B cell (primary cell): ENCODE measurements at regions of chr2 and their contacts with region 1.

Region 1: GRCh38 chr2:118088051-118089024 is at the start of gene INSIG2:
- DNase-seq: peak; percentile 94
- ATAC-seq: peak; percentile 86
- H3K4me3 ChIP-seq: peak within 1 kb of the TSS; percentile 81 to 95 (median 82)
- H3K4me3 Mint-ChIP-seq: peak within 1 kb of the TSS; percentile 93
- H3K27ac ChIP-seq: peak within 1 kb of the TSS; percentile 60 to 71
- H3K27ac Mint-ChIP-seq: peak within 1 kb of the TSS; percentile 88
- H3K4me1 ChIP-seq: peaks cover 17 to 20% of the 10 kb centered on the region in 2 donors
- H3K4me1 Mint-ChIP-seq: peaks cover 30% of the 10 kb centered on the region
- H3K27me3 ChIP-seq: no peaks in the 10 kb centered on the region
- H3K27me3 Mint-ChIP-seq: no peaks in the 10 kb centered on the region
- CTCF ChIP-seq: peak; percentile 18
- total RNA-seq, gene INSIG2: 26.5 and 29.5 TPM in 2 replicates

Region 2: DNA sequence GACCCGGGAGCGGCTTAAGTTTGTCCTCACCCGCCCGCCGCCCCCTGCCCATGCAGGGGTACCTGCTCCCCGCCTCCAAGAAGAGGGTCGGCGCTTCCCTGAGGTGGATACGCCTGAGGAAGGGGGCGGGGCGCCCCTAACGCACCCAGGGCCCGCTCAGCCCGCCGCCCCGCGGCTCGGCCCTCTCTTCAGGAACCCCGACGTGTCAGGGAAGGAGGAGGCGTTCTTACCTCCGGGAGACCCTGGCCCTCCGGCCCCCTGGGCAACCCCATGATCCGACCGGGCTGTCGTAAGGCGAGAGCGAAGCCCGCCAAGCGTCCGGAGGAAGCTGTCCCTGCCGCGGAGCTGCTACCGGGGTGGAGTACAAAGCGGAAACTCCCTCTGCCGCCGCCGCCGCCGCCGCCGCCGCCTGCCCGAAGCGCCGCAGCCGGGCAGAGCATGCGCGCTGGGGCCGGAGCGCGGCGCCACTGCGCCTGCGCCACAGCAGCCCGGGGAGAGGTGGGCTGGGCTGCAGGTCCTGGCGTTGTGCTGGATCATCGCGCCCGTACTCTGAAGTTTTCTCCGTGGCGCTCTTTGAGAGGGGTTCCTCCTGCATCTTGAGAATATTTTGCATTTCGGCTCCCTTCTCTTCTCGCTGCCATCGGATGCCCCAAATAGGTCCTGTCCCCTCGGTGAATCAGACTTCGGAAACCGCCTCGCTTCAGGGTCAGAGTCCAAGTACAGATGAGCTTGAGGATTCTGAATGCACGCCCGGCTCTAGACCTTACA is 74.4 kb before region 1 on chr2 and contains the start of gene CCDC93:
- CTCF ChIA-PET with region 1: no interaction called
- POLR2A ChIA-PET with region 1: no interaction called
- intact Hi-C with region 1: loop called (anchors 1 kb)
- DNase-seq: peak; percentile 94
- ATAC-seq: peak; percentile 86
- H3K4me3 ChIP-seq: peak within 1 kb of the TSS; percentile 82 to 99 (median 96)
- H3K4me3 Mint-ChIP-seq: peak within 1 kb of the TSS; percentile 97
- H3K27ac ChIP-seq: peak within 1 kb of the TSS; percentile 90 to 97
- H3K27ac Mint-ChIP-seq: peak within 1 kb of the TSS; percentile 92
- H3K4me1 ChIP-seq: peaks cover 21 to 24% of the 10 kb centered on the region in 2 donors
- H3K4me1 Mint-ChIP-seq: peaks cover 34% of the 10 kb centered on the region
- H3K27me3 ChIP-seq: peaks cover 0 to 9% (median 0%) of the 10 kb centered on the region in 4 experiments
- H3K27me3 Mint-ChIP-seq: peaks cover 9% of the 10 kb centered on the region
- CTCF ChIP-seq: no peak
- total RNA-seq, gene CCDC93: 79.6 and 86.7 TPM in 2 replicates

Region 3: DNA sequence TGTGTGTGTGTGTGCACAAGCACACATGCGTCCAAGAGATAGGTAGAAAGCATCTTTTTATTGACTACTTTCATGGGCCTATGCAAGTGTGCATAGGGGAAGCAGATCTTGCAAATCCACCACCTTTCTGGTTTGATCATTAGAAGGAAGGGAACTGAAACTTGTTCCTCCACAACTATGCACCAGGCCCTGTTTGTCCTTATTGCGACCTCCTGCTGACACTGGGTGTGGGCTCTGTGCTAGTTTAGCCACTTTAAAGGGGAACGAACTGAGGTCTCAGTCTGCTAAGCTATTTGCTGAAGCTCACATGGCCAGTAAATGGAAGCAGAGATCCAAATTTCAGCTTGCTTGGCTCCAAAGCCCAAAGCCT is 32.2 kb before region 1 on chr2:
- CTCF ChIA-PET with region 1: interaction called, 10 read pairs
- POLR2A ChIA-PET with region 1: interaction called, 3 read pairs
- intact Hi-C with region 1: loop called (anchors 1 kb)
- DNase-seq: peak; percentile 86
- ATAC-seq: peak; percentile 91
- H3K4me3 ChIP-seq: peak overlapping the region in 2 of 5 experiments; percentile 16 to 22
- H3K4me3 Mint-ChIP-seq: peak overlapping the region; percentile 80
- H3K27ac ChIP-seq: peak overlapping the region; percentile 67 to 88
- H3K27ac Mint-ChIP-seq: peak overlapping the region; percentile 98
- H3K4me1 ChIP-seq: peaks cover 52 to 63% of the 10 kb centered on the region in 2 donors
- H3K4me1 Mint-ChIP-seq: peaks cover 60% of the 10 kb centered on the region
- H3K27me3 ChIP-seq: no peaks in the 10 kb centered on the region
- H3K27me3 Mint-ChIP-seq: no peaks in the 10 kb centered on the region
- CTCF ChIP-seq: no peak

Region 4: GRCh38 chr2:118061135-118061955 is 27.0 kb before region 1 on chr2:
- CTCF ChIA-PET with region 1: interaction called, 10 read pairs
- POLR2A ChIA-PET with region 1: interaction called, 3 read pairs
- intact Hi-C with region 1: loop called (anchors 1 kb)
- DNase-seq: peak; percentile 72
- ATAC-seq: peak; percentile 84
- H3K4me3 ChIP-seq: no peak overlapping the region
- H3K4me3 Mint-ChIP-seq: peak overlapping the region; percentile 10
- H3K27ac ChIP-seq: no peak overlapping the region
- H3K27ac Mint-ChIP-seq: peak overlapping the region; percentile 60
- H3K4me1 ChIP-seq: peaks cover 33 to 45% of the 10 kb centered on the region in 2 donors
- H3K4me1 Mint-ChIP-seq: peaks cover 43% of the 10 kb centered on the region
- H3K27me3 ChIP-seq: peaks cover 0 to 5% (median 0%) of the 10 kb centered on the region in 4 experiments
- H3K27me3 Mint-ChIP-seq: peaks cover 13% of the 10 kb centered on the region
- CTCF ChIP-seq: peak; percentile 79

Region 5: DNA sequence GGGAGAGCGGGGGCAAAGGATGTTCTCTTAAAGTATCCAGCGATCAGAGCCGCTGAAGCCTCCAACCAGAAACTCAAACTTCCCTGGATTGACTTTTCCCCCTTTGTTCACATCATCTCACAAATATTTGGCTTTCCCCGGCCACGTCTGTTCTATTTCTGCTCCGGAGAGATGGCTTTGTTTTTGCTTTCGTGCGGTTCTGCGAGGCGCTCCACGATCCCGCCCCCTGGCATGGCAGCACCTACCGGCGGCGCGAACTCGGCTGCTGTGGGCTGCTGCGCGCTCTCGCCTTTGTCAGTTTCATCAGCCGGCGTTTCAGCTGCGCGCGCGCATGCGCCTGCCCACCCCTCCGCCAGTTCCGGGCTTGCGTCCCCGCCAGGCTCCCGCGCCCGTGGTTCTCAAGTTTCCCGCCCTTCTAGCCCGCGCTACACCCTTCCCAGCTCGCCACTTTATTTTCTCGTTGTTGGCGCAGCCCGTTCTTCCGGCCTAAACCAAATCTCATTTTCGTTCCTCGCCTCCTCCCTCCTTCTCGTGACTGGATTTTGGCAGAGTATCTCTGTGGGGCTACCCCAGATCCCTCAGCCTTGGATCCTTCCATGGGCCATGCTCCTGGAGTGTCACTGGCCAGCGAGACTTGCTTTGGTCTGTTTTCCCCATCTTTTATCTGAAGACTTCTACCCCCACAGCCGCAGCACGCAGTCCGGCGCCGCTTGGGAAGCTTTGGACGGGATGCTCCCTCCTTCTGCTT is 97.9 kb after region 1 on chr2:
- CTCF ChIA-PET with region 1: interaction called, 4 read pairs
- POLR2A ChIA-PET with region 1: no interaction called
- intact Hi-C with region 1: loop called (anchors 1 kb)
- DNase-seq: peak; percentile 89
- ATAC-seq: peak; percentile 93
- H3K4me3 ChIP-seq: peak overlapping the region; percentile 60 to 90 (median 80)
- H3K4me3 Mint-ChIP-seq: peak overlapping the region; percentile 90
- H3K27ac ChIP-seq: peak overlapping the region; percentile 56 to 75
- H3K27ac Mint-ChIP-seq: peak overlapping the region; percentile 89
- H3K4me1 ChIP-seq: peaks cover 0 to 14% of the 10 kb centered on the region in 2 donors
- H3K4me1 Mint-ChIP-seq: peaks cover 17% of the 10 kb centered on the region
- H3K27me3 ChIP-seq: peaks cover 0 to 3% (median 2%) of the 10 kb centered on the region in 4 experiments
- H3K27me3 Mint-ChIP-seq: peaks cover 6% of the 10 kb centered on the region
- CTCF ChIP-seq: no peak

Region 6: GRCh38 chr2:118371515-118371914 is 283.2 kb after region 1 on chr2:
- CTCF ChIA-PET with region 1: no interaction called
- POLR2A ChIA-PET with region 1: no interaction called
- intact Hi-C with region 1: no loop called
- DNase-seq: no peak
- ATAC-seq: no peak
- H3K4me3 ChIP-seq: no peak overlapping the region
- H3K4me3 Mint-ChIP-seq: no peak overlapping the region
- H3K27ac ChIP-seq: no peak overlapping the region
- H3K27ac Mint-ChIP-seq: no peak overlapping the region
- H3K4me1 ChIP-seq: no peaks in the 10 kb centered on the region
- H3K4me1 Mint-ChIP-seq: no peaks in the 10 kb centered on the region
- H3K27me3 ChIP-seq: no peaks in the 10 kb centered on the region
- H3K27me3 Mint-ChIP-seq: peaks cover 26% of the 10 kb centered on the region
- CTCF ChIP-seq: no peak

Region 7: GRCh38 chr2:119431155-119431975 is 1343.0 kb after region 1 on chr2 and contains the start of gene TMEM37:
- CTCF ChIA-PET with region 1: no interaction called
- POLR2A ChIA-PET with region 1: no interaction called
- intact Hi-C with region 1: loop called (anchors 10 kb)
- DNase-seq: peak; percentile 63
- ATAC-seq: peak; percentile 72
- H3K4me3 ChIP-seq: peak within 1 kb of the TSS; percentile 11 to 67 (median 45)
- H3K4me3 Mint-ChIP-seq: peak within 1 kb of the TSS; percentile 88
- H3K27ac ChIP-seq: no peak within 1 kb of the TSS
- H3K27ac Mint-ChIP-seq: no peak within 1 kb of the TSS
- H3K4me1 ChIP-seq: peaks cover 20 to 21% of the 10 kb centered on the region in 2 donors
- H3K4me1 Mint-ChIP-seq: peaks cover 24% of the 10 kb centered on the region
- H3K27me3 ChIP-seq: peaks cover 0 to 69% (median 25%) of the 10 kb centered on the region in 4 experiments
- H3K27me3 Mint-ChIP-seq: peaks cover 78% of the 10 kb centered on the region
- CTCF ChIP-seq: no peak
- total RNA-seq, gene TMEM37: not detected in 2 replicates